CD8-positive, alpha-beta memory T cell (primary cell): ENCODE measurements at regions of chr2 and their contacts with region 1.

Region 1: DNA sequence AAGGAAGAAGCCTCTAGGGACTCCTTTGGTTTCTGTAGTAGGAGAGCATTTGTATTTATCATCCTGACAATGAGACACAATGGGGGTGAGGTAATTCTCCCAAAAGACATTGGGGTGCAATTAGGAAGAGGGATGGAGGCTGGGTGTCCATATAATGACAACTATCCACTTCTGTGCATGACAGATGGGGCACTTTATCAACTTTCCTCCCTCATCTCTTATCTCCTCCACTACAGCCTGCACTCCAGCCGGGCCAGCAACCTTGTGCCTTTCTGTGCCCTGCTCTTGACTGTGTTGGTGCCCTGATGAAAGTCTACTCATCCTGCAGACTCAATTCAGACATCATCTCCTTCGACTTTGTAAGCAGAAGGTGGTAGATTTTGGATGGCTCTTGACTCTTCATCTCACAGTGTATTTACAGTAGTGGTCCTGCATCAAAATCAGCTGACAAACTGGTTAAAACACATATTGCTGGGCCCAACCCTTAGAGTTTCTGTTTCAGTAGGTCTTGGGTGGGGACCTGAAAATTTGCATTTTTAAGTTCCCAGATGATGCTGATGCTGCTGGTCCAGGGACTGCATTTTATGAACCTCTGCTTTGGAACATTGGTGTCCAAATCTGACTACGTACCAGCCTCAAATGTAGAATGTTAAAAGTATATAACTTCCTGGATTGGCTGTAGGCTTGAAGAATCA is 40.8 kb upstream of the CFAP36 start:
- DNase-seq: no peak
- H3K4me3 ChIP-seq: no peak overlapping the region
- H3K4me3 Mint-ChIP-seq: no peak overlapping the region
- H3K27ac ChIP-seq: no peak overlapping the region
- H3K27ac Mint-ChIP-seq: no peak overlapping the region
- H3K4me1 ChIP-seq: no peaks in the 10 kb centered on the region
- H3K4me1 Mint-ChIP-seq: no peaks in the 10 kb centered on the region
- H3K27me3 ChIP-seq: no peaks in the 10 kb centered on the region
- H3K27me3 Mint-ChIP-seq: peaks cover 1 to 3% of the 10 kb centered on the region in 2 donors

Region 2: GRCh38 chr2:55302241-55302640 is 176.5 kb before region 1 on chr2:
- CTCF ChIA-PET with region 1: no interaction called
- POLR2A ChIA-PET with region 1: no interaction called
- DNase-seq: no peak
- H3K4me3 ChIP-seq: no peak overlapping the region
- H3K4me3 Mint-ChIP-seq: no peak overlapping the region
- H3K27ac ChIP-seq: no peak overlapping the region
- H3K27ac Mint-ChIP-seq: peak overlapping the region in 3 of 8 donors; percentile 32 to 46 (median 34)
- H3K4me1 ChIP-seq: peaks cover 10% of the 10 kb centered on the region
- H3K4me1 Mint-ChIP-seq: peaks cover 6 to 15% (median 9%) of the 10 kb centered on the region in 3 donors
- H3K27me3 ChIP-seq: no peaks in the 10 kb centered on the region
- H3K27me3 Mint-ChIP-seq: no peaks in the 10 kb centered on the region

Region 3: DNA sequence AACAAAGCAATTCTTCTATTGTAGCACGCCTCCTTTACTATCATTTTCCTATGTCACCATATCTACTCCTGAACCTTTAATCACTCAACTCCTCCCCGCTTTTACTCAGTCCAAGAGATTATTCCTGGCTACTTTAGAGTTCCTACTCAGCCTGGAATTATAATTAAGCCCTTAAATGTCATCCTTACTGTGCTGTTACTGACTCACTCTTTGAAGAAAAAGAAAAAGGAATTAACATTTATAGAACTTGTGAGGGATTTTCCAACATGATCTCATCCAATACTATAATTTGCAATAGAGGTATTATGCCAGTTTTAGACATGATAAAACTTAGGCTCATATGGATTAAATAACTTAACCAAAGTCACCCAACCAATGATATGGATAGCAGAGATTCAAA is 120.8 kb before region 1 on chr2:
- CTCF ChIA-PET with region 1: no interaction called
- POLR2A ChIA-PET with region 1: interaction called, 13 read pairs
- DNase-seq: no peak
- H3K4me3 ChIP-seq: no peak overlapping the region
- H3K4me3 Mint-ChIP-seq: no peak overlapping the region
- H3K27ac ChIP-seq: no peak overlapping the region
- H3K27ac Mint-ChIP-seq: no peak overlapping the region
- H3K4me1 ChIP-seq: no peaks in the 10 kb centered on the region
- H3K4me1 Mint-ChIP-seq: no peaks in the 10 kb centered on the region
- H3K27me3 ChIP-seq: no peaks in the 10 kb centered on the region
- H3K27me3 Mint-ChIP-seq: no peaks in the 10 kb centered on the region